Ovary (tissue), 10 donors: ENCODE measurements at regions of chr3 and their contacts with region 1.

Region 1: GRCh38 chr3:196995646-196996371 is 27.2 kb upstream of the PIGZ start:
- DNase-seq: peak in 1 of 5 donors; percentile 17
- H3K4me3 ChIP-seq: no peak overlapping the region
- H3K27ac ChIP-seq: no peak overlapping the region
- H3K4me1 ChIP-seq: no peaks in the 10 kb centered on the region
- H3K27me3 ChIP-seq: no peaks in the 10 kb centered on the region
- CTCF ChIP-seq: no peak
- EP300 ChIP-seq: no peak
- POLR2A ChIP-seq: no peak

Region 2: DNA sequence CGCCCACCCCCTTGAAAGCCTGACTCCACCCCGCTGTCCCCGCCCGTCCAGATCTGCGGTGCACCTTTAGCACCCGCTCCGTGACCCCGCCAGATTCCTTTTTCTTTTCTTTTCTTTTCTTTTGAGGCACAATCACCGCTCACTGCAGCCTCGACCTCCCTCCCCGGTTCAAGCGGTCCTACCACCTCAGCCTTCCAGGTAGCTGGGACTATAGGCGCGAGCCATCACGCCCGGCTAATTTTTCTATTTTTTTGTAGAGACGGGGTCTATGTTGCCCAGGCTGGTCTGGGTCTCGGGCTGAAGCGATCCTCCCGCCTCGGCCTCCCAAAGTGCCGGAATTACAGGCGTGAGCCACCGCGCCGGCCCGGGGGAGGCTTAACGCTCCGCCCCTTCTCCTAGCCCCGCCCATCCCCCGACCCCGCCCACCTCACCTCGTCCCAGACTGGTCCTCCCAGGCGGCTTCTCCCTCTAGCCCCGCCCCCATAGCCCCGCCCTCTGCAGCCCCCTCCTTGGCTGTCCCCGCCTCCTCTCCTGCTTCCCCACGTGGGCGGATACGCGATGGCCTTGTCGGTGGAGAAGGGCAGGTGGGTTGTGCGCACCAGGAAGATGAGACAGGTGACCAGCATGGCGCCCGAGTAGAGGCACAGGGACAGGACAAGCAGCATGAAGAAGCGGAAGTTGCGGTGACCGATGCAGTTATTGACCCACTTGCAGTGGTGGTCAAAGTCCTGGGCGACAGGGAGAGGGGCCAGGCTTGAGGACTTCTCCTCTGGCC is 787.8 kb before region 1 on chr3:
- intact Hi-C with region 1: no loop called
- DNase-seq: peak; percentile 70 to 89 (median 83)
- H3K4me3 ChIP-seq: peak overlapping the region; percentile 25
- H3K27ac ChIP-seq: peak overlapping the region in 1 of 2 donors; percentile 45
- H3K4me1 ChIP-seq: peaks cover 7% of the 10 kb centered on the region
- H3K27me3 ChIP-seq: no peaks in the 10 kb centered on the region
- CTCF ChIP-seq: no peak
- EP300 ChIP-seq: no peak
- POLR2A ChIP-seq: no peak

Region 3: GRCh38 chr3:196942226-196942914 is 53.4 kb before region 1 on chr3 and contains the start of gene NCBP2:
- intact Hi-C with region 1: no loop called
- DNase-seq: peak; percentile 98 to 99 (median 99)
- H3K4me3 ChIP-seq: peak within 1 kb of the TSS; percentile 99
- H3K27ac ChIP-seq: peak within 1 kb of the TSS; percentile 42 to 82
- H3K4me1 ChIP-seq: peaks cover 11% of the 10 kb centered on the region
- H3K27me3 ChIP-seq: no peaks in the 10 kb centered on the region
- CTCF ChIP-seq: peak; percentile 39 to 73 (median 60)
- EP300 ChIP-seq: no peak
- POLR2A ChIP-seq: peak; percentile 61
- total RNA-seq, gene NCBP2: 17.4 to 64.7 (median 45.8) TPM

Region 4: GRCh38 chr3:197501879-197502620 is 506.2 kb after region 1 on chr3:
- intact Hi-C with region 1: loop called in 1 of 4 experiments (anchors 10 kb)
- DNase-seq: no peak
- H3K4me3 ChIP-seq: no peak overlapping the region
- H3K27ac ChIP-seq: no peak overlapping the region
- H3K4me1 ChIP-seq: no peaks in the 10 kb centered on the region
- H3K27me3 ChIP-seq: no peaks in the 10 kb centered on the region
- CTCF ChIP-seq: no peak
- EP300 ChIP-seq: no peak
- POLR2A ChIP-seq: no peak